Activated CD4-positive, alpha-beta T cell treated with anti-CD3 and anti-CD28 coated beads for 36 hours (primary cell): ENCODE measurements at regions of chr1 and their contacts with region 1.

Region 1: GRCh38 chr1:172443626-172444453 is at the start of gene PIGC:
- DNase-seq: peak; percentile 97
- ATAC-seq: peak; percentile 99
- H3K4me3 Mint-ChIP-seq: peak within 1 kb of the TSS; percentile 85
- H3K27ac Mint-ChIP-seq: peak within 1 kb of the TSS; percentile 91
- H3K4me1 Mint-ChIP-seq: peaks cover 31% of the 10 kb centered on the region
- H3K27me3 Mint-ChIP-seq: no peaks in the 10 kb centered on the region
- total RNA-seq, gene PIGC: 14.7 to 17.1 TPM

Region 2: DNA sequence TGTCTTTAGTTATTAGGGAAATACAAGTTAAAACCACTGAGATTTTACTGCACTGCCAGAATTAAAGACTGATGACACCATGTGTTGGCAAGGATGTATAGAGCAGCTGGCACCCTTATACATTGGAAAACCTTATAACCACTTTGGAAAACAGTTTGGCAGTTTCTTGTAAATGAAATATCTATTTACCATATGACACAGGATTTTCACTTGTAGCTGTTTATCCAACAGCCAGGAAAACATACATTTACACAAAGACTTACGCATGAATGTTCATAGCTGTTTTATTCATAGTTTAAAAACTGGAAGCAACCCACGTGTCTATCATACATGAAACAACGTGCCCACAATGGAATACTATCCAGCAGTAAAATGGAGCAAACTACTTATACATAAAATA is 913.2 kb before region 1 on chr1:
- CTCF ChIA-PET with region 1: no interaction called
- POLR2A ChIA-PET with region 1: no interaction called
- intact Hi-C with region 1: no loop called
- DNase-seq: no peak
- ATAC-seq: no peak
- H3K4me3 Mint-ChIP-seq: no peak overlapping the region
- H3K27ac Mint-ChIP-seq: no peak overlapping the region
- H3K4me1 Mint-ChIP-seq: peaks cover 7% of the 10 kb centered on the region
- H3K27me3 Mint-ChIP-seq: no peaks in the 10 kb centered on the region

Region 3: DNA sequence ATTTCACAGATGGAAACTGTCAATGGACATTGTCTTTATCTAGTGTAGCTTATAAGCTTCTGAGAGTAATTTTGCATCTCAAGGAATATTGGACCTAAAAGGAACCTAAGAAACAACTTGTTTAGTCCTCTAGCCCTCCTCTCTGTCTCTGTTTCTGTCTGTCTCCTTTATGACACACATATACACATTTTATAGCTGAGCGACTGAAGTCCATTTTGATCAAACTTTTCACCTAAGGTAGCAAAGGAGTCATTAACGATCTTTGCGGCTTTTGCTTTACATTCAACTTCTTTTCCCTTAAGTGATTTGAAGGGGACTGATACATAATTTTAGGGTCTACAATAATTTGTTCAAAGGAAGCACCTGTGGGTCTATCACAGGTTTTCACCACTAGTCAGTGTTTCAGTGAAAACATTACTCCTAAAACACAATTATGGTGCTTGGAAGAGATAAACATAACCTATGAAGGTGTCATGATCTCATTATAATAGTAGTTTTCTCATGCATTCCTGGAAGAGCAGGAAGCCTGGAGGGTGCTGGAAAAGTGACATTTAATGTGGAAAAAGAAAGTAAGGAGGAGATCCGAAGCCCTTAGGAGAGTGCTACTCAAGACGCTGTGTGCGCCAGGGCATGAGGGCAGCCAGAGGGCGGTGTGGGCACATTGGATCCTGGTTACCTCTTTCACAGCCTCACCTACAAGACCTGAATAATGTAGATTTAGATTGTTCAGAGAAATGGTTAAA is 353.9 kb before region 1 on chr1:
- CTCF ChIA-PET with region 1: interaction called, 3 read pairs
- POLR2A ChIA-PET with region 1: no interaction called
- intact Hi-C with region 1: loop called (anchors 1 kb)
- DNase-seq: peak; percentile 83
- ATAC-seq: peak; percentile 93
- H3K4me3 Mint-ChIP-seq: no peak overlapping the region
- H3K27ac Mint-ChIP-seq: no peak overlapping the region
- H3K4me1 Mint-ChIP-seq: peaks cover 2% of the 10 kb centered on the region
- H3K27me3 Mint-ChIP-seq: no peaks in the 10 kb centered on the region

Region 4: DNA sequence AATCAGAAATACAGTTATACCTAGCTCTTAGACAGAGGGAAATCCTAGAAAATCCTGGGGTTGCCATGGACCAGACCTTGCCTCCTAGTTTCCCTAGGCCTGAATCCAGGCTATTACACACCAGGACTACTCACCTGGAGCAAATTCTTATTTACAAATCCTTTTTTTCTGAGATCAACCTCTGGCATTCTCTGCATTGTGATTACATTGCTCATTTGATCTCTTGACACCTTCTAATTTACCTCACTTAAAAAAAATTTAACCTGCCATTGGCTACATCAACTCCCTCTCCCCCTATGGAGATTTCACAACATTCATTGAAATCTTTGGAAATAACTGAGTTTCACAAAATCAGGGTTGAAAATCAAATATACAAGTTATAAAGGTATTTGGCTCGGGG is 26.3 kb before region 1 on chr1:
- CTCF ChIA-PET with region 1: interaction called, 18 read pairs
- POLR2A ChIA-PET with region 1: no interaction called
- intact Hi-C with region 1: no loop called
- DNase-seq: no peak
- ATAC-seq: no peak
- H3K4me3 Mint-ChIP-seq: no peak overlapping the region
- H3K27ac Mint-ChIP-seq: no peak overlapping the region
- H3K4me1 Mint-ChIP-seq: peaks cover 11% of the 10 kb centered on the region
- H3K27me3 Mint-ChIP-seq: no peaks in the 10 kb centered on the region

Region 5: DNA sequence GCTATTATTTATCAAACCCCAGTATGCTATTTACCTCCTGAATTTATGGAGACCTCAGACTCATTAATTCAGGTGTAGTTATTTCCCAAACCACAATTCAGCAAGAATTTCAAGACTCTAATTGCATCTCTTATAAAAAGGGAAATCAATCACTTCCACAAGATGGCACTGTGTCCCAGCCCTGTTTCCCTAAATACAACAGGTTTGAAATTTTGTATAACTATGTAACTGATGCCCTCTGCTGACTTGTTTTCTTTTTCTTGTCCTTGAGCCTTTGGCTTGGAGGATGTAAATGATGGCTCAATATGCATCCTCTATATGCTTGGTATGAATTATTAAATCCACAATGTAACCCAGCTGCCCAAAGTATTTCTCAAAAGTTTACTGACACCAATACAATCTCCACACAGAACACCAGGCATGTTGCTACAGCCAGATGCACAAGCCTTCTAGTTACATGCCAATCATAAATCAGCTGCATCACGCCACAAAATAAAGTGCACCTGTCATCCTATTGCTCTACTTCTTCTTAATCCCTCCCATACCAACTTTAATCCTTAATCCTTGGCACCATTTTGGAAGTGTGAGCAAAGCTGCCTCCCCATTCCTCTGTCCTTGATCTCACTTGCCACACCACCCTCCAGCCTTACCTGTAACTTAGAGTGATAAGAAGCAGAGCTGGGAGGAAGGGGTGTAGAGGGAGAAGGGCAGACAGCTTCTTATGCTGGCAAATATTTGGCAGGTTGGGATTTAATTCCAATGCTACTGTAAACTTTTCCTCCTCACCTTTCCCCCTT is 14.3 kb before region 1 on chr1:
- CTCF ChIA-PET with region 1: interaction called, 63 read pairs
- POLR2A ChIA-PET with region 1: no interaction called
- intact Hi-C with region 1: loop called (anchors 1 kb)
- DNase-seq: peak; percentile 66
- ATAC-seq: peak; percentile 71
- H3K4me3 Mint-ChIP-seq: no peak overlapping the region
- H3K27ac Mint-ChIP-seq: no peak overlapping the region
- H3K4me1 Mint-ChIP-seq: peaks cover 30% of the 10 kb centered on the region
- H3K27me3 Mint-ChIP-seq: no peaks in the 10 kb centered on the region

Region 6: DNA sequence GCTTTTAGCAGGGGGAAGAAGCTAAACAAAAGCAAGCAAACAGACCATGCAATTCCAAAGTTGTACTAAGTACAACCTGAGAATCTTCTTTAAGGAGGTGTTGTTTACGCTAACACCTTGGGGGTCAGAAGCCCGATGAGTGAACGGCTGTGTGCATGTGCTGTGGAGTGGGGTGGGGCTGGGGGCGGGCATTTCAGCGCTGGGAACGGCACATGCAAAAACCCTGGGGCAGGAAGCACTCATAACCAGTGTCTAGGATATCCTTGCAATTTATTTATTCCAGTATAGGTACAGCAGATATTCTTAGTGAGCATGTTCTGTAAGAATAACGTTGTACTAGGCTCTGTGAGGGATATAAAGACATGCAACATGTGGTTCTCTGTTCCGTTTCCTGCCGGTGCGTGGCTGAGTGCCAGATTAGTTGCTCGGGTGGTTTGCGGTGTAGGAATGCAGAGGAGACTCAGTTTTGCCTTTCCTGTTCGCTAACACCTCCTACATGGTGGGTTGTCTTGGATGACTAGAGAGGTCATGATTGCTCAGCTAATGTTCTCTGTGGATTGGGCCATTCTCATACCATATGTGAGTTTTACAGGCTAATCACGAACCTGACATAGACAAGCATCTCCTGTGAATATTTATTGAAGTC is 218.7 kb after region 1 on chr1:
- CTCF ChIA-PET with region 1: no interaction called
- POLR2A ChIA-PET with region 1: no interaction called
- intact Hi-C with region 1: no loop called
- DNase-seq: peak; percentile 95
- ATAC-seq: peak; percentile 82
- H3K4me3 Mint-ChIP-seq: peak overlapping the region; percentile 78
- H3K27ac Mint-ChIP-seq: peak overlapping the region; percentile 57
- H3K4me1 Mint-ChIP-seq: peaks cover 74% of the 10 kb centered on the region
- H3K27me3 Mint-ChIP-seq: peaks cover 17% of the 10 kb centered on the region

Region 7: DNA sequence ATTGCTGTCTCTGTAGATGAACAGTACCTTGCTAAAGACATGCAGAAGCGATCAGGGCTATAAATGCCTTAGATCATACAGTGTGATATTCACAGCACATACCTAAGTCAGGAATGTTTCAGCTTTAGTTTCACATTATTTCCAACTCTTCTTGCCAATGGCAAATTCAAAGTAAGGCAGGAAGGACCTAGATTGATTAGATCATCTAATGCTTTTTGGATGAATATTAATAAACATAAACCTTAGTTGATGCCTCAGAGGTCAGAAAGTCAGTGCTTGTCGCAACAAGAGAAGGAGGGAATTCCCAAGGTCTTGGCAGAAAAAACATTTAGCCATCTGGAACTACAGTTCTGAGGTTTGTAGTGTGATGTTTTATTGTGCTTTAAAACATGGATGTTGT is 484.6 kb after region 1 on chr1:
- CTCF ChIA-PET with region 1: no interaction called
- POLR2A ChIA-PET with region 1: no interaction called
- intact Hi-C with region 1: no loop called
- DNase-seq: no peak
- ATAC-seq: no peak
- H3K4me3 Mint-ChIP-seq: no peak overlapping the region
- H3K27ac Mint-ChIP-seq: no peak overlapping the region
- H3K4me1 Mint-ChIP-seq: peaks cover 5% of the 10 kb centered on the region
- H3K27me3 Mint-ChIP-seq: peaks cover 7% of the 10 kb centered on the region